Gastrocnemius medialis (tissue), 4 donors: ENCODE measurements at regions of chr7 and their contacts with region 1.

Region 1: GRCh38 chr7:1159891-1160668 is at the start of gene ZFAND2A:
- DNase-seq: peak; percentile 97 to 98
- ATAC-seq: peak; percentile 98
- H3K4me3 ChIP-seq: peak within 1 kb of the TSS; percentile 72 to 100 (median 88)
- H3K27ac ChIP-seq: peak within 1 kb of the TSS; percentile 96 to 99 (median 97)
- H3K4me1 ChIP-seq: peaks cover 18 to 22% of the 10 kb centered on the region in 2 donors
- H3K27me3 ChIP-seq: no peaks in the 10 kb centered on the region
- CTCF ChIP-seq: no peak
- POLR2A ChIP-seq: peak; percentile 93 to 95
- total RNA-seq, gene ZFAND2A: 12.0 to 17.9 (median 14.1) TPM

Region 2: DNA sequence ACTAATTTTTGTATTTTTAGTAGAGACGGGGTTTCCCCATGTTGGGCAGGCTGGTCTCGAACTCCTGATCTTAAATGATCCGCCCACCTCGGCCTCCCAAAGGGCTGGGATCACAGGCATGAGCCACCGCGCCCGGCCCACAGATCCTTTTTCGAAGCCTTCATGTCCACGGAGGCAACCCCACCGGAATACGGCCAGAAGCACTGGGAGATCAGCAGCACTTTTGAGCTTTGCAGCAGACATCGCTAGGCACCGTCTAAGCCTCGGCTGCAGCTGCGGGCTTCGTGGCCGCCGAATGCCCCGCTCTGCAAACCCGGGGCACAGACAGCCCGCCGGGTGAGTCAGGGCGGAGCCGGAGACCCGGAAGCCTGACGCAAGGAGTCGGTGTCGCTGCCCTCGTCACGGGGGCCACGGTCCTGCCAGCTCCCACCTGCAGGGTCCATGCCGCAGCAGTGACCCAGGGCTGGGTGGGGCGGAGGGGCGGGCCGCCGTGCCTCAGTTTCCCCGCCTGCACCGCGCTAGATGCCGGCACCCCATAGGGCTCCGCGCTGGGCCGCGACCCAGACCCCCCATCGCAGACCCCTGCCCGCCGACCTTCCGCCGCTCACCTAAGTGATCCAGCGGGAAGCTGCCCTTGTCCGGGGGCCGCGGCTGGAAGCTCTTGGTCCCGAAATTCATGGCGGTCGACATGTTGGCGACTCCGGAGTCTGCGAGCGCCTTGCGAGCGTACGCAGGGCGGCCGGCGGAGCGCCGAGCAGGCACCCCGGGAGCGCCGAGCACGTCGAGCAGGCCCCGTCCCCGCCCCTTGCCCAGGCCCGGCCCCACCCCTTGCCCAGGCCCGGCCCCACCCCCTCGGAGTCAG is 185.0 kb before region 1 on chr7 and contains the start of gene COX19:
- in situ Hi-C with region 1: loop called in 2 of 4 experiments (anchors 25 kb)
- intact Hi-C with region 1: loop called (anchors 5 kb)
- DNase-seq: peak; percentile 77 to 83
- ATAC-seq: peak; percentile 93 to 94
- H3K4me3 ChIP-seq: peak within 1 kb of the TSS; percentile 88 to 100 (median 96)
- H3K27ac ChIP-seq: peak within 1 kb of the TSS; percentile 92 to 98 (median 96)
- H3K4me1 ChIP-seq: peaks cover 15 to 18% of the 10 kb centered on the region in 2 donors
- H3K27me3 ChIP-seq: no peaks in the 10 kb centered on the region
- CTCF ChIP-seq: no peak
- POLR2A ChIP-seq: peak; percentile 60 to 81
- total RNA-seq, gene COX19: 4.7 to 6.5 (median 5.2) TPM

Region 3: GRCh38 chr7:992709-993607 is 167.1 kb before region 1 on chr7:
- in situ Hi-C with region 1: loop called in 2 of 4 experiments (anchors 25 kb)
- intact Hi-C with region 1: no loop called
- DNase-seq: peak; percentile 92
- ATAC-seq: peak; percentile 94 to 97
- H3K4me3 ChIP-seq: no peak overlapping the region
- H3K27ac ChIP-seq: no peak overlapping the region
- H3K4me1 ChIP-seq: peaks cover 3% of the 10 kb centered on the region in 2 donors
- H3K27me3 ChIP-seq: peaks cover 28 to 46% (median 44%) of the 10 kb centered on the region in 3 donors
- CTCF ChIP-seq: peak; percentile 99 to 100 (median 100)
- POLR2A ChIP-seq: no peak

Region 4: GRCh38 chr7:1028031-1028770 is 131.9 kb before region 1 on chr7:
- in situ Hi-C with region 1: no loop called
- intact Hi-C with region 1: loop called (anchors 5 kb)
- DNase-seq: peak; percentile 76 to 85
- ATAC-seq: peak; percentile 81 to 88
- H3K4me3 ChIP-seq: peak overlapping the region; percentile 62 to 91 (median 74)
- H3K27ac ChIP-seq: peak overlapping the region; percentile 93 to 98 (median 97)
- H3K4me1 ChIP-seq: peaks cover 21 to 29% of the 10 kb centered on the region in 2 donors
- H3K27me3 ChIP-seq: no peaks in the 10 kb centered on the region
- CTCF ChIP-seq: no peak
- POLR2A ChIP-seq: peak; percentile 63 to 69

Region 5: GRCh38 chr7:1137510-1138167 is 22.4 kb before region 1 on chr7:
- in situ Hi-C with region 1: no loop called
- intact Hi-C with region 1: loop called (anchors 1 kb)
- DNase-seq: no peak
- ATAC-seq: peak; percentile 87 to 88
- H3K4me3 ChIP-seq: peak overlapping the region; percentile 68 to 100 (median 90)
- H3K27ac ChIP-seq: peak overlapping the region; percentile 75 to 89 (median 84)
- H3K4me1 ChIP-seq: peaks cover 11 to 17% of the 10 kb centered on the region in 2 donors
- H3K27me3 ChIP-seq: no peaks in the 10 kb centered on the region
- CTCF ChIP-seq: no peak
- POLR2A ChIP-seq: no peak